Activated CD8-positive, alpha-beta T cell treated with anti-CD3 and anti-CD28 coated beads for 36 hours (primary cell): ENCODE measurements at regions of chr16 and their contacts with region 1.

Region 1: GRCh38 chr16:89552329-89552728 is 8.2 kb upstream of the RPL13 start:
- DNase-seq: no peak
- ATAC-seq: no peak
- H3K4me3 Mint-ChIP-seq: no peak overlapping the region
- H3K27ac Mint-ChIP-seq: no peak overlapping the region
- H3K4me1 Mint-ChIP-seq: peaks cover 35% of the 10 kb centered on the region
- H3K27me3 Mint-ChIP-seq: no peaks in the 10 kb centered on the region
- CTCF ChIP-seq: no peak

Region 2: DNA sequence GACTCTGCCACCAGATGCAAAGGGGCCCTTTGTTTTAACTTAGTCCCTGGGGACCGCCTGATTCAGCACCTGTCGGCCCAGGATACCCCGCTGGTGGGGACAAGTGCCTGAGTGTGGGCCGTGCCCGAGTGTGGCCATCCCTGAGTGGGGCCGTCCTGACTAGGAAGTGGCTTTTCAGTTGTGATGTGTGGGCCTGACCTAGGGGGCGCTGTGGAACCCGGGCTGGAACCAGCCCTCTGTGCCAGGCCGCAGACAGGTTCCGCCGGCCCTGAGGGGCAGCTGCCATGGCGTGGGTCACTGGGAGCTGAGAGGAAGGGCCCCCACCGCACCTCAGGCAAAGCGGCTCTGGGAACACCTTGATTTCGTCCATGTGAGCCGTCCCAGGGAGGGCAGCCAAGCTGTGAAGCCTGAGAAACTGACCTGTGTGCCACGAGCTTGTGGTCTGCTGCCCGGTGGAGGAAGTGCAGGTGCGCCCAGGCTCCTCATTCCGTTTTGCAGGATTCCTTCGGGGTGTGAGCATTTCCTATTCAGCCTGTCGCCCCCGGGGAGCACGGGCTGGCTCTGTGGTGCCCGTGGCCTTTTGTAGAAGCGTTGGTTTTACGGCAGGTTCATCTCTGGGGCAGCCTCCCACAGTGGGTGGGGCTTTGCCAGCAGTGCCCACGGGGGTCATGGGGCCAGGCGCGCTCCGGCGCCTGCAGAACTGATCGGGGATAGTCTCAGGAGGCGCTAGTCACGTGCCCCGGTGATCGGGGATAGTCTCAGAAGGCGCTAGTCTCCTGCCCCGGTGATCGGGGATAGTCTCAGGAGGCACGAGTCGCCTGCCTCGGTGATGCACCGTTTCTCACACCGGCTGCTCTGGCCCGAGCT is 13.4 kb after region 1 on chr16:
- CTCF ChIA-PET with region 1: interaction called, 5 read pairs
- POLR2A ChIA-PET with region 1: interaction called, 12 read pairs
- intact Hi-C with region 1: no loop called
- DNase-seq: peak; percentile 73
- ATAC-seq: peak; percentile 55
- H3K4me3 Mint-ChIP-seq: peak overlapping the region; percentile 50
- H3K27ac Mint-ChIP-seq: peak overlapping the region; percentile 73
- H3K4me1 Mint-ChIP-seq: peaks cover 43% of the 10 kb centered on the region
- H3K27me3 Mint-ChIP-seq: no peaks in the 10 kb centered on the region
- CTCF ChIP-seq: peak; percentile 68